ENCODE measurements at regions of chr14 and their contacts with region 1.

Region 1: DNA sequence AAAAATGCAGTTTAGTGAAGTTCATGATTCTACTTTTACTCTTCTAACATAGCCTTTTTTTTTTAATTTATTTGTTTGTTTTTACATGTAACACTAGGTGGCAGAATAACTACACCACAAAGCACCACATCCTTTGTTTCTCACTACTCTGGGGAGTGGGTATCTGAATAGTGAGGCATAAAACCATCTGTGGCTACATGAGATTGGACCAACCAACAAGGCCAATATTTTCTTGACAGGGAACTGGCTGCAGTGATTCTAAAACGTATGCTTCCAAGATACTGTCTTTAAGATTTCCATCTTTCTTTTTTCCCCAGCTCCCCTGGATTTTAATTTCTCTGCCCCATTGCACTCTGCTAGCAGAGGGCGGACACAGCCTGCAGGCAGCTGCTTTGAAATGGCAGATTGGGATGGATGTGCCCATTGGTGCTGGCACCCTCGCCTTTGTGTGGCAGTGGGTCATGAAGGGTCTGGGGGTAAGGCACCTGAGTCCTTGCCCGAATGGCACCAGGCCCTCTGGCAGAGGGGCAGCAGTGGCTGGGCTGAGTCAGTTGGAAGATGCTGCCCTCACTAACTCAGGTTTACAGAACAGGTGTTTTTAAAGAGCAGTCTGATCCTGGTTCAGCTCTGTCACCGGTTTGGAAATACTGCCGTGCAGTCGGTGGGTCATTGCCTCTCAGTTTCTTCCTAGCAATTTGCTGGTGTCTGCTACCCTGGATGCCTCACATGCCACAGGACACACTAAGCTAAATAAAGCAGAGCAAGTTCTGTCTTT is 429.1 kb downstream of the RAD51B start:
- DNase-seq: peak; percentile 71
- ATAC-seq: 0 out of 2 replicates have a peak, but pooled peaks have one; percentile 6
- H3K4me3 ChIP-seq: no peak overlapping the region
- H3K27ac ChIP-seq: peak overlapping the region; percentile 82
- H3K4me1 ChIP-seq: peaks cover 65% of the 10 kb centered on the region
- H3K27me3 ChIP-seq: no peaks in the 10 kb centered on the region
- CTCF ChIP-seq: peak; percentile 85

Region 2: GRCh38 chr14:68047906-68048305 is 200.8 kb before region 1 on chr14:
- CTCF ChIA-PET with region 1: no interaction called
- POLR2A ChIA-PET with region 1: no interaction called
- intact Hi-C with region 1: loop called (anchors 1 kb)
- DNase-seq: peak; percentile 82
- ATAC-seq: peak; percentile 100
- H3K4me3 ChIP-seq: peak overlapping the region; percentile 33
- H3K27ac ChIP-seq: peak overlapping the region; percentile 21
- H3K4me1 ChIP-seq: peaks cover 9% of the 10 kb centered on the region
- H3K27me3 ChIP-seq: no peaks in the 10 kb centered on the region
- CTCF ChIP-seq: no peak

Region 3: DNA sequence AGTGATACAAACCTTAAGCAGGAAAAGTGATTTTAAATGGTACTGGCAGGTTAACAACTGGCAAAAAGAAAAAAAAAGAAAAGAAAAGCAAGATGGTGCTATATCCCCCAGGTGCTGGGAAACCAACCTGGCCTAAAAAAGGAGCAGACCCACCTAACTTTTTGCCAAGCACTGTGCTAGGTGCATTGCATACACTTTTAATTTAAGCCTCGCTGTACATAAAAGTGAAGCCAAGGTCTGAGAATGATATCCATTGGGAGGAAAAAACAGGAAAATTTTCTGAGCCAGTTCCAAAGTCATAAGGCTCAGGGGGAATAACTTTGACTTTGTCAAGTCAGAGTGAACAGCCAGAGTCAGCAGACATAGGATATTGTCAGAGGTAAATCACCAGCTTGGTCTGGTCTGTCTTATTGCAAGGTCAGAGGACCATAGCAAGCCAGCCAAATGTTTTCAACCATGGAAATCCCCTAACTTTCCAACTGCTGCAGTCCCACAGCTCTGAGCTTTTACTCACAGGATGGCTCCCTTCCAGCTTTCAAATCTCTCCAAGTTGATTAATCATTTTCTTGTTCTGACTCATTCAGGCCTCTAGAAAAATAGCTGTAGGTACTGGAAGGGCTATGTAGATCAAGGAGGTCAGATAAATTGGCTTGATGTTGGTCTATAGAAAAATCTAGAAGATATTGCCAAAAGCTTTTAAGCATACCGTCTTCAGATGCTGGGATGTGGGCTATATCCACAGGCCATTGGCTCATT is 16.2 kb before region 1 on chr14:
- CTCF ChIA-PET with region 1: no interaction called
- POLR2A ChIA-PET with region 1: interaction called, 3 read pairs
- intact Hi-C with region 1: loop called (anchors 2 kb)
- DNase-seq: peak; percentile 99
- ATAC-seq: peak; percentile 87
- H3K4me3 ChIP-seq: peak overlapping the region; percentile 44
- H3K27ac ChIP-seq: peak overlapping the region; percentile 97
- H3K4me1 ChIP-seq: peaks cover 53% of the 10 kb centered on the region
- H3K27me3 ChIP-seq: no peaks in the 10 kb centered on the region
- CTCF ChIP-seq: no peak

Region 4: GRCh38 chr14:68408680-68409079 is 160.0 kb after region 1 on chr14:
- CTCF ChIA-PET with region 1: interaction called, 3 read pairs
- POLR2A ChIA-PET with region 1: interaction called, 10 read pairs
- intact Hi-C with region 1: loop called (anchors 1 kb)
- DNase-seq: peak; percentile 63
- ATAC-seq: peak; percentile 59
- H3K4me3 ChIP-seq: no peak overlapping the region
- H3K27ac ChIP-seq: peak overlapping the region; percentile 22; the same call in 1 of the 2 replicates
- H3K4me1 ChIP-seq: peaks cover 56% of the 10 kb centered on the region
- H3K27me3 ChIP-seq: no peaks in the 10 kb centered on the region
- CTCF ChIP-seq: peak; percentile 63

Region 5: DNA sequence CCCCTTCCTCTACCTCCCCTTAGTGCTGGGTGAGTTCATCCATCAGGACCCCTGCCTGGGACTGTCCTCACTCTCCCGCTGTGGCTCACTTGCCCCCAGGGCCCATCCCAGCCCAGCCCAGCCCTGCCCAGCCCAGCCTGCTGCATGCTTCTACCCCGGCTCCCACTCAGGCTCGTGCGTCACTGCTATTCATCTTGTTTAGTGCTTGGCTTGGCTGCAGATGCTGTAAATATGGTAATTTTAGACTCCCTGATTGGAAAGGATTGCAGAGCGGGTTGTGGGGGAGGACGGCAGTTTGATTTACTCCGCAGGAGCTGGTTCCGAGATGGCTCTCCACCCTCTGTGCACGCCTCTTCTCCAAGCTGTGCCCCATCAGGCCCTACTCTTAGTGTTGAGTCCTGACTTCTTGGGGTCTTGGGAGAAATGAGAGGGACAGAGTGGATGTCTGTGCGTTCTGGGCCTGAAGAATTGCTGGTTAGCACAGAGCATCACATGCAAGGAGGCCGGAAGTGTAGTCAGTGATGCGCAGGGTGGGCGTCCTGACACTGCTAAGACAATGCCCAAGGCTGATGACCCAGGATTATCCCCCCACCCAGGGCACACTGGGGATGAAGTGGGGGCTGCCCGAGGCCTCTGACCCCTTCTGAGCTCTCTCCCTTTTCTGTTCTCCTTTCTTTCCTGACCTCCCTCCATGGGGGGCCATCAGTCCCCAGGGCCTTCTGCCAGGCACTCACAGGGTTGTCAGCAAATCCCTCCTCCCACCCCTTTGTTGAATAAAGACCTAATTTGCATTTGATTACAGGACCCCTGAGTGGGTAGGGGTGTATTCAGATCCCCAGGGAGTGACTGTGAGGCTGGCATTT is 299.8 kb after region 1 on chr14:
- CTCF ChIA-PET with region 1: no interaction called
- POLR2A ChIA-PET with region 1: no interaction called
- intact Hi-C with region 1: loop called (anchors 1 kb)
- DNase-seq: peak; percentile 97
- ATAC-seq: peak; percentile 82
- H3K4me3 ChIP-seq: peak overlapping the region; percentile 13; the same call in 1 of the 2 replicates
- H3K27ac ChIP-seq: peak overlapping the region; percentile 98
- H3K4me1 ChIP-seq: peaks cover 47% of the 10 kb centered on the region
- H3K27me3 ChIP-seq: no peaks in the 10 kb centered on the region
- CTCF ChIP-seq: no peak

Region 6: DNA sequence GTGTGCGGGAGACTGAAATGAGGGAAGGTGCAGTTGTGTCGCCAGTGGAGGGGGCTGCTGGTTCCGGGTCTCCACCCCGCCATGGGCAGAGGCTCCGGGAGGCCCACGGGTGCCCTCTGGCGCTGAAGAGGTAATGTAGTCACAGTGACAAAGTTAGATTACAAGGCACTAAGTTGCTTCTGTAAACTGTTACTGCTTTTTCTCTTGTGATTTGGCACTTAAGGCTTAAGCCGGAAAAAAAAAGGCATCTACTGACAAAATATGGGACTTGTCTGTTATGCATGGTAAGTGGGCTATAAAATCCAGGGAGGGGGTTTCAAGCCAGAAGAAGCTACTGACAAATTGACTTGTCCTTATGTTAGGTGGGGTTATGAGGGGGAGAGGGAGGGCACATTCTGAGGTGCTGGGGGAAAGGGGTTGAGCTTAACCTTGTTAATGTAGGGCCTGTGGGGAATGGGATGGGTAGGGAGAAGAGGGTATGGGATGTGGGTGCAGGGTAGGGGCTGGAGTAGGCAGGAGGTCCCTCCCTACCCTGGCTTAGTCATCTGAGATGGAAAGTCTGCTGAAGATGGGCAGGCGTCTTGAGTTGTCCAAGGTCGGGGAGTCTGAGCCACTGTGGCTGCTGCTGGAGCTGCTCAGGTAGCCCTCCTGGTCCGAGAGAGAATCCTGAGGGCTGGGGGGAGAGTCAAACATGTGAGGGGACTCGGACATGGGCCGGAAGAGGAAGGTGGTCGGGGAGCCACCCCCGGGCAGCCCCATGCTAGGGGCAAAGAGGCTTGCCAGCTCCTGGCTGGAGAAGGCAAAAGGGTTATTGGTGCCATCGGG is 540.5 kb after region 1 on chr14:
- CTCF ChIA-PET with region 1: interaction called, 11 read pairs
- POLR2A ChIA-PET with region 1: interaction called, 23 read pairs
- intact Hi-C with region 1: loop called (anchors 1 kb)
- DNase-seq: peak; percentile 89
- ATAC-seq: peak; percentile 19
- H3K4me3 ChIP-seq: peak overlapping the region; percentile 90
- H3K27ac ChIP-seq: peak overlapping the region; percentile 97
- H3K4me1 ChIP-seq: peaks cover 56% of the 10 kb centered on the region
- H3K27me3 ChIP-seq: no peaks in the 10 kb centered on the region
- CTCF ChIP-seq: peak; percentile 86

Measured in PC-3 (cell line).